Cardiac septum (tissue), 1 donor: ENCODE measurements at regions of chr16 and their contacts with region 1.

Region 1: DNA sequence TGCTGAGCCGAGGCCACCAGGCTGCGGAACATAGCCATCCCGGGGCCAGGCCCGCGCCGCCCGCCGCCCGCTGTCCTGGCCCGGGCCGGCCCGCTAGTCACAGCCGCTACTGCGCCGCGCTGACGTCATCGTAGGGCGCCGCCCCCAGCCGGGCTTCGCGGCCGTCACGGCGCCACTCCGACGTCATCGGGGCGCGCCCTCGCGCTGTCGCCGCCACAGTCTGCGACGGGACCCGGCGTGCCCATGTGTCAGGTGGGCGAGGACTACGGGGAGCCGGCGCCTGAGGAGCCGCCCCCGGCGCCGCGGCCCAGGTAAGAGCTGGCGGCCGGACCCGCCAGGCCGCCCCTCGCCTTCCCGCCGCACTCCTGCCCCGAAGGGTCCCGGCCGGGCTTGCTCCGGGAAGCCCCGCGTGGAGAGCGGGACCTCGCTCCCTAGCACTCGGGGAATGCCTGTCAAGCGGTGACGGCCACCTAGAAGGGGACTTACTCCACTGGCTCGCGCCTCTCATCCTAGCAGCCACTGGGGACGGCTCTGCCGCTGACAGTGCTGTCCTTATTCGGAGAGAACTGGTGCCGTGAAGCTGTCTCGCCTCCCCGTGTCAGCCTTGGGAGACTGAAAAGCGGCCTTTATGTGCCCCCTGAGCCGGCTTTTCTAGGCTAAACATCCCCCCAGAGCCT is at the starts of genes CTU2 and RNF166:
- DNase-seq: peak; percentile 96
- total RNA-seq, gene CTU2: 14.9 TPM
- total RNA-seq, gene RNF166: 17.1 TPM

Region 2: GRCh38 chr16:88383401-88384221 is 322.8 kb before region 1 on chr16:
- intact Hi-C with region 1: no loop called
- DNase-seq: peak; percentile 75

Region 3: GRCh38 chr16:88569985-88570690 is 136.3 kb before region 1 on chr16 and contains the start of gene ZC3H18:
- intact Hi-C with region 1: loop called (anchors 5 kb)
- DNase-seq: peak; percentile 98
- total RNA-seq, gene ZC3H18: 20.6 TPM

Region 4: GRCh38 chr16:88628512-88628974 is 77.9 kb before region 1 on chr16:
- intact Hi-C with region 1: loop called (anchors 5 kb)
- DNase-seq: no peak